ENCODE measurements at regions of chr9 and their contacts with region 1.

Region 1: DNA sequence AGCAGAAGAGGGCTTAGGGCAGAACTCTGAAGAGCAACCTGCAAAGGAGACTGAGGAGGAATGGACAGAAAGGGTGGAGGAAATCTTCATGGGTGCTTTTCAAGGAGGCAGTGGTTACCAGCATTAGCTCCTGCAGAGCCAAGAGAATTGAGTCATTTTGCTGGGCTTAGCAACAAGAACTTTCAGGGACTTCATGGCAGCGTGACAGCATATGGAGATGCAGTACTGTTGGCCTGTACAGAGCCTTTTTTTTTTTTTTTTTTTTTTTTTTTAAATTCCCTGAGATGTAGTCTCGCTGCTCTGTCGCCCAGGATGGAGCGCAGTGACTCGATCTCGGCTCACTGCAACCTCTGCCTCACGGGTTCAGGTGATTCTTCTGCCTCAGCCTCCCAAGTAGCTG is 296.0 kb upstream of the DMRT1 start:
- DNase-seq: no peak
- H3K4me3 ChIP-seq: no peak overlapping the region
- H3K27ac ChIP-seq: no peak overlapping the region
- H3K4me1 ChIP-seq: peaks cover 18% of the 10 kb centered on the region
- H3K27me3 ChIP-seq: no peaks in the 10 kb centered on the region
- CTCF ChIP-seq: no peak
- POLR2A ChIP-seq: no peak

Region 2: GRCh38 chr9:567128-567746 is 21.8 kb after region 1 on chr9:
- intact Hi-C with region 1: no loop called
- DNase-seq: no peak
- H3K4me3 ChIP-seq: no peak overlapping the region
- H3K27ac ChIP-seq: no peak overlapping the region
- H3K4me1 ChIP-seq: no peaks in the 10 kb centered on the region
- H3K27me3 ChIP-seq: no peaks in the 10 kb centered on the region
- CTCF ChIP-seq: no peak
- POLR2A ChIP-seq: no peak

Region 3: GRCh38 chr9:751137-752051 is 205.9 kb after region 1 on chr9:
- intact Hi-C with region 1: loop called (anchors 2 kb)
- DNase-seq: peak in 1 of 2 donors; percentile 64
- H3K4me3 ChIP-seq: no peak overlapping the region
- H3K27ac ChIP-seq: peak overlapping the region; percentile 67
- H3K4me1 ChIP-seq: peaks cover 50% of the 10 kb centered on the region
- H3K27me3 ChIP-seq: no peaks in the 10 kb centered on the region
- CTCF ChIP-seq: no peak
- POLR2A ChIP-seq: no peak